ENCODE measurements at regions of chrX and their contacts with region 1.

Region 1: DNA sequence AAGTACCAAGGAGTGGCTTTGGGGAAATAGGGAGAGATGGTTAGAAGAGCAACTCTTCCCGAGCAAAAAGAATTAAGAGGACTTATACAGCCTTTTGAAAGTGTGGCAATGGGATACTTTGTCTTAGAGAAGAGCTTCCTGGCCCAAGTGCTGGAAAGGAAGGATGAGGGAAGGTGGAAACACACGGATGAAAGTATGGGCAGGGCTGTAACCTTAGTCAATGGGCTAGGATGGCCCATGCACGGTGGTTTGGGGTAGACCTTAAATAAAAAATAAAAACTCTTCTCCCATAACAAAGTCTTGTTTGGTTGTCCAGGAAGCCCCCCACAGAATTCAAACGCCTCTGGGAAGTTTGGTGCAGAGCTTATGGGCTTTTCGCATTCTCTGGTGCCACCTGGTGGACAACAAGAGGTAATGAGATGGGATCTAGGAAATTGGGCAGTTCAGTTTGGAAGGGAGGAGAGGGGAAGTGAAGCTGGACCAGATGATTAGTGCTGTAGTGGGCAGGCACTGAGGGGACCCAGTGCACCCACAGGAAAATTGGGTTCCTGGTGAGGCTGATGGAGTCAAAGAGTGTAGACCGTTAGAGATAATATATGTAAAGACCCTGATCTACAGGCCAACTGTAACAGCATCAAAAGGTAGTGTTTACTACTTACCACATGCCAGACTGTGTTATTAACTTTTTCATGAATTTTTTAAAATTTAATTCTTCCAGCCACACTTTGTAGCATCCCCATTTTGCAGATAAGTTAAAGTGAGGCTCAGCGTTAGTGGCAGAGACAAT is 13.8 kb upstream of the ENOX2 start:
- H3K4me3 ChIP-seq: no peak overlapping the region
- H3K27ac ChIP-seq: no peak overlapping the region
- H3K4me1 ChIP-seq: no peaks in the 10 kb centered on the region
- CTCF ChIP-seq: peak; percentile 73

Region 2: GRCh38 chrX:130393451-130394074 is 523.3 kb before region 1 on chrX:
- CTCF ChIA-PET with region 1: interaction called, 69 read pairs
- POLR2A ChIA-PET with region 1: no interaction called
- H3K4me3 ChIP-seq: no peak overlapping the region
- H3K27ac ChIP-seq: no peak overlapping the region
- H3K4me1 ChIP-seq: no peaks in the 10 kb centered on the region
- CTCF ChIP-seq: peak; percentile 73

Region 3: DNA sequence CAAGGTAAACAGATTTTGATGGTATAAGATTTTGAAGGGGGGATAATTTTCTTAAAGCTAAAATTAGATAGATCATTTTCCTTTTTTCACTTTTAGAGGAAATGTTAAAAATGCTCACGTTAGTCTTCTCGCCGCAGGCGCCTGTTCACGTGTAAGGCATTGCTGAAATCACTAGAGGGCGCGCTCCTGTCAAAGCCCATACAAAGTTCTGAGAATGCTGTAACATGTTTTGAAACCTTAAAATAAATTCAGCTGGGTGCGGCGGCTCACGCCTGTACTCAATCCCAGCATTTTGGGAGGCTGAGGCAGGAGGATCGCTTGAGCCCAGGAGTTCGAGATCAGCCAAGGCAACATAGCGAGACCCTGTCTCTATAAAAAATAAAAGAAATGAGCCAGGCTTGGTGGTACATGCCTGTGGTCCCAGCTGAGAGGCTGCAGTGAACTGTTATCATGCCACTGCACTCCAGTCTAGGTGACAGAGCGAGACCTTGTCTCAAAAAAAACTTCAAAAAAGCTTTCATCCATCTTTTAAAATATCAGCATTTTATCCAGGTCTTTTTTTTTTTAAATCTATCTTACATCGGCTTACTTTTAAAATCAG is 377.0 kb before region 1 on chrX:
- CTCF ChIA-PET with region 1: interaction called, 48 read pairs
- POLR2A ChIA-PET with region 1: no interaction called
- H3K4me3 ChIP-seq: no peak overlapping the region
- H3K27ac ChIP-seq: no peak overlapping the region
- H3K4me1 ChIP-seq: no peaks in the 10 kb centered on the region
- CTCF ChIP-seq: no peak; the same call in 1 of the 2 replicates

Region 4: GRCh38 chrX:130575831-130576389 is 340.9 kb before region 1 on chrX:
- CTCF ChIA-PET with region 1: interaction called, 62 read pairs
- POLR2A ChIA-PET with region 1: interaction called, 6 read pairs
- H3K4me3 ChIP-seq: no peak overlapping the region
- H3K27ac ChIP-seq: no peak overlapping the region
- H3K4me1 ChIP-seq: no peaks in the 10 kb centered on the region
- CTCF ChIP-seq: peak; percentile 39; the same call in 1 of the 2 replicates

Region 5: GRCh38 chrX:130893356-130894085 is 23.3 kb before region 1 on chrX:
- CTCF ChIA-PET with region 1: interaction called, 10 read pairs
- POLR2A ChIA-PET with region 1: no interaction called
- H3K4me3 ChIP-seq: no peak overlapping the region
- H3K27ac ChIP-seq: no peak overlapping the region
- H3K4me1 ChIP-seq: peaks cover 4% of the 10 kb centered on the region
- CTCF ChIP-seq: no peak

Region 6: GRCh38 chrX:130933358-130933757 is 16.5 kb after region 1 on chrX:
- CTCF ChIA-PET with region 1: interaction called, 10 read pairs
- POLR2A ChIA-PET with region 1: no interaction called
- H3K4me3 ChIP-seq: no peak overlapping the region
- H3K27ac ChIP-seq: no peak overlapping the region
- H3K4me1 ChIP-seq: no peaks in the 10 kb centered on the region
- CTCF ChIP-seq: no peak

Region 7: DNA sequence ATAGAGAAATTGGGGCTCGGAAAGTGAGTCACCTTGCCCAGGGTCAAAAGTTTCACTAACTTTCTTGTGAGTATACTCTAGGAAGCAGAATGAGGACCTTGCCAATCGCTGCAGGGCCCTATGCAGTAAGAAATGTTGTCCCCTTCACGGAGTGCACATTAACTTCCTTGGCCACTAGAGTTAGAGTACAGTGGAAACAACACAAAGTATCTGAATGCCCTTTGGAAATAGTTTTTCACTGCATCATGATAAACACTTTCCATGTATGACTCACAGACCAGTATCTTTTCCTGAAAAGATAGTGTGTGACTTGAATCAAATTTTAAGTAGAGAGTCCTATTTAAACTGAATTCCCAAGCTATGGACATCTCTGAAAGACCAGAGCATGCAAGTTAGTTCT is 1060.8 kb after region 1 on chrX:
- CTCF ChIA-PET with region 1: no interaction called
- POLR2A ChIA-PET with region 1: no interaction called
- H3K4me3 ChIP-seq: no peak overlapping the region
- H3K27ac ChIP-seq: no peak overlapping the region
- H3K4me1 ChIP-seq: no peaks in the 10 kb centered on the region
- CTCF ChIP-seq: no peak